Activated CD4-positive, alpha-beta memory T cell treated with anti-CD3 and anti-CD28 coated beads, Interleukin-2, amount 10 ng/mL, durations not matched to agents 7 days and 5 days (primary cell): ENCODE measurements at regions of chr9 and their contacts with region 1.

Region 1: DNA sequence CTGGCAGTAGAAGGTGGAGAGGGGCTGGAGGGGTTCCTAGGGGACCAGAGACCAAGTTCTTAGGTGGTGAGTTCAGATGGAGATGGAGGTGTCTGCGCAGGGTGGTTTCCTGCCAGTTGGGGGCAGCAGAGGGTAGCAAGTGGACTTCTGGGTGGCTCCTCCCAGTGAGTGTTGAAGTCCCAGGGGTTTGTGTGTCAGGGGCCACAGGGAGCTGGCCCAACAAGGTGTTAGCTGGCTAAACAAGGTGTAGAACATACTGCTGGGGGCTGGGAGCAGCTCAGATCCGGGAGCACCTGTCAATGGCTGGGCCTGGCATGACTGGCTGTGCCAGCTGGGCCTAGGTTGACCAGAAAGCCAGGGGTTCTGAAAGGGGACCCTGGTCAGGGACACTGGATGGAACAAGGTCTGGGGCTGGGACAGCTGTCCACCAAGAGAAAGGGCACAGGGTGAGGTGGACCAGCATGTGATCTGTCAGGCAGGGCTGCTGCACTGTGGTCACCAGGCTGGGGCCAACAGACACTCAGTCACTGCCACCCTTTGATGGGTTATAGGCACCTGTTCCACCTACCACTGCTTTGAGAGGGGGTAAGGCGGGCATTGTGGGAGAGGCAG is 35.6 kb downstream of the DAB2IP start:
- DNase-seq: peak; percentile 75
- H3K4me3 Mint-ChIP-seq: no peak overlapping the region
- H3K27ac Mint-ChIP-seq: no peak overlapping the region
- H3K4me1 Mint-ChIP-seq: no peaks in the 10 kb centered on the region
- H3K27me3 Mint-ChIP-seq: peaks cover 10% of the 10 kb centered on the region

Region 2: DNA sequence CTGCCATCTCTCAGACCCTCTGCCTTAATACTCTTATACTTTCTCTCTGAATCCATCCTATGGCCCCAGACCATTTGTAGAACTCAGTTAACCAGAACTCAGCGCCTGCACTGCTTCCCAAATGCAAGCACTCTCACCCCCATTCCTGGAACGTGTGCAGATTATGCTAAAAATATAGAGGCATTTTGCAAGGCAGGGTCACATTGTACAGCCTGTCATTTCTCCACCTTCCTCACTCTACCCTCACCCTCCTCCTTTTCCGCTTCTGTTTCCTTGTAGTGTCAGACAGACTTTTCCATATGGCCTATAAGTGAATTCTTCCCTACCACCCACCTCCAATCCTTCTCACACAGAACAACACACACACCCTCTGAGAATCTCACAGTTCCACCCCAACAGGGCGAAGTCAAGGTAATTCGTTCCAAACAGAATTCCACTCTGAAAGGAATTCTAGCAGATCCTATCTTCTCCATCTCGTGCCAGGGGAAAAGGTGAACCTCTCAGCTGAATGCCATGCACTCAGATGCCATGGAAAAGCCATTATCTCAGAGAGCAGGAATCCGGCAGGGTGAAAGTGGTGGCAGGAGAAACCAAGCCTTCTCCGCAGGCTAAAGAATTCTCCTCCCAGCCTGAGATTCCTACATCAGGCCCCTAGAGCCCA is 212.7 kb before region 1 on chr9:
- CTCF ChIA-PET with region 1: no interaction called
- POLR2A ChIA-PET with region 1: no interaction called
- DNase-seq: no peak
- H3K4me3 Mint-ChIP-seq: no peak overlapping the region
- H3K27ac Mint-ChIP-seq: no peak overlapping the region
- H3K4me1 Mint-ChIP-seq: no peaks in the 10 kb centered on the region
- H3K27me3 Mint-ChIP-seq: peaks cover 23% of the 10 kb centered on the region

Region 3: GRCh38 chr9:121545875-121546423 is 141.1 kb before region 1 on chr9:
- CTCF ChIA-PET with region 1: interaction called, 25 read pairs
- POLR2A ChIA-PET with region 1: no interaction called
- DNase-seq: peak; percentile 74
- H3K4me3 Mint-ChIP-seq: no peak overlapping the region
- H3K27ac Mint-ChIP-seq: no peak overlapping the region
- H3K4me1 Mint-ChIP-seq: peaks cover under 1% of the 10 kb centered on the region
- H3K27me3 Mint-ChIP-seq: peaks cover 5% of the 10 kb centered on the region

Region 4: GRCh38 chr9:121650217-121651007 is 36.6 kb before region 1 on chr9:
- CTCF ChIA-PET with region 1: no interaction called
- POLR2A ChIA-PET with region 1: no interaction called
- DNase-seq: no peak
- H3K4me3 Mint-ChIP-seq: no peak overlapping the region
- H3K27ac Mint-ChIP-seq: no peak overlapping the region
- H3K4me1 Mint-ChIP-seq: peaks cover 2% of the 10 kb centered on the region
- H3K27me3 Mint-ChIP-seq: peaks cover 42% of the 10 kb centered on the region

Region 5: GRCh38 chr9:121698627-121699570 is 11.9 kb after region 1 on chr9:
- CTCF ChIA-PET with region 1: interaction called, 13 read pairs
- POLR2A ChIA-PET with region 1: no interaction called
- DNase-seq: peak; percentile 77
- H3K4me3 Mint-ChIP-seq: no peak overlapping the region
- H3K27ac Mint-ChIP-seq: no peak overlapping the region
- H3K4me1 Mint-ChIP-seq: peaks cover 7% of the 10 kb centered on the region
- H3K27me3 Mint-ChIP-seq: peaks cover 58% of the 10 kb centered on the region

Region 6: GRCh38 chr9:121992571-121993212 is 305.7 kb after region 1 on chr9:
- CTCF ChIA-PET with region 1: interaction called, 13 read pairs
- POLR2A ChIA-PET with region 1: no interaction called
- DNase-seq: peak; percentile 55
- H3K4me3 Mint-ChIP-seq: no peak overlapping the region
- H3K27ac Mint-ChIP-seq: no peak overlapping the region
- H3K4me1 Mint-ChIP-seq: no peaks in the 10 kb centered on the region
- H3K27me3 Mint-ChIP-seq: no peaks in the 10 kb centered on the region